ENCODE measurements at regions of chr1 and their contacts with region 1.

Region 1: GRCh38 chr1:169586395-169587255 is at the start of gene F5:
- DNase-seq: peak; percentile 92
- ATAC-seq: peak; percentile 96
- H3K4me3 ChIP-seq: peak within 1 kb of the TSS; percentile 84 to 98 (median 98)
- H3K27ac ChIP-seq: peak within 1 kb of the TSS; percentile 95
- H3K4me1 ChIP-seq: peaks cover 57% of the 10 kb centered on the region
- H3K27me3 ChIP-seq: no peaks in the 10 kb centered on the region; a peak in 1 of 5 replicates
- CTCF ChIP-seq: peak; percentile 90
- EP300 ChIP-seq: peak in 1 of 2 experiments; percentile 57; a peak in 2 of 4 replicates
- POLR2A ChIP-seq: peak; percentile 94 to 95
- RAD21 ChIP-seq: peak; percentile 81
- total RNA-seq, gene F5: 38.3 and 38.5 TPM in 2 replicates

Region 2: GRCh38 chr1:169466259-169467230 is 120.1 kb before region 1 on chr1:
- CTCF ChIA-PET with region 1: no interaction called
- POLR2A ChIA-PET with region 1: no interaction called
- in situ Hi-C with region 1: no loop called
- intact Hi-C with region 1: loop called (anchors 5 kb)
- DNase-seq: peak; percentile 24
- ATAC-seq: peak; percentile 69
- H3K4me3 ChIP-seq: no peak overlapping the region
- H3K27ac ChIP-seq: no peak overlapping the region
- H3K4me1 ChIP-seq: no peaks in the 10 kb centered on the region
- H3K27me3 ChIP-seq: no peaks in the 10 kb centered on the region
- CTCF ChIP-seq: peak; percentile 43
- EP300 ChIP-seq: no peak
- POLR2A ChIP-seq: no peak
- RAD21 ChIP-seq: peak; percentile 25; the same call in 1 of the 2 replicates

Region 3: GRCh38 chr1:169485544-169486278 is 100.9 kb before region 1 on chr1 and contains the start of gene SLC19A2:
- CTCF ChIA-PET with region 1: no interaction called
- POLR2A ChIA-PET with region 1: interaction called, 17 read pairs
- in situ Hi-C with region 1: no loop called
- intact Hi-C with region 1: no loop called
- DNase-seq: peak; percentile 98
- ATAC-seq: peak; percentile 98
- H3K4me3 ChIP-seq: peak within 1 kb of the TSS; percentile 74 to 87 (median 81)
- H3K27ac ChIP-seq: peak within 1 kb of the TSS; percentile 95
- H3K4me1 ChIP-seq: peaks cover 62% of the 10 kb centered on the region
- H3K27me3 ChIP-seq: no peaks in the 10 kb centered on the region; a peak in 1 of 5 replicates
- CTCF ChIP-seq: peak; percentile 51
- EP300 ChIP-seq: peak; percentile 11 to 43; a peak in 1 of 4 replicates
- POLR2A ChIP-seq: peak; percentile 95 to 96
- RAD21 ChIP-seq: peak; percentile 11; the same call in 1 of the 2 replicates
- total RNA-seq, gene SLC19A2: 19.1 and 30.4 TPM in 2 replicates

Region 4: GRCh38 chr1:169546087-169546995 is 40.3 kb before region 1 on chr1:
- CTCF ChIA-PET with region 1: interaction called, 10 read pairs
- POLR2A ChIA-PET with region 1: interaction called, 7 read pairs
- in situ Hi-C with region 1: no loop called
- intact Hi-C with region 1: loop called (anchors 1 kb)
- DNase-seq: peak; percentile 66
- ATAC-seq: peak; percentile 81
- H3K4me3 ChIP-seq: no peak overlapping the region
- H3K27ac ChIP-seq: peak overlapping the region; percentile 23
- H3K4me1 ChIP-seq: peaks cover 14% of the 10 kb centered on the region
- H3K27me3 ChIP-seq: no peaks in the 10 kb centered on the region
- CTCF ChIP-seq: peak; percentile 83
- EP300 ChIP-seq: peak in 1 of 2 experiments; percentile 45; a peak in 1 of 4 replicates
- POLR2A ChIP-seq: no peak
- RAD21 ChIP-seq: peak; percentile 36; the same call in 1 of the 2 replicates

Region 5: GRCh38 chr1:169565335-169566271 is 21.0 kb before region 1 on chr1:
- CTCF ChIA-PET with region 1: no interaction called
- POLR2A ChIA-PET with region 1: interaction called, 37 read pairs
- in situ Hi-C with region 1: no loop called
- intact Hi-C with region 1: no loop called
- DNase-seq: peak; percentile 65
- ATAC-seq: peak; percentile 49
- H3K4me3 ChIP-seq: no peak overlapping the region
- H3K27ac ChIP-seq: peak overlapping the region; percentile 64
- H3K4me1 ChIP-seq: peaks cover 65% of the 10 kb centered on the region
- H3K27me3 ChIP-seq: no peaks in the 10 kb centered on the region
- CTCF ChIP-seq: no peak
- EP300 ChIP-seq: peak in 1 of 2 experiments; percentile 68; a peak in 1 of 4 replicates
- POLR2A ChIP-seq: no peak
- RAD21 ChIP-seq: no peak

Region 6: DNA sequence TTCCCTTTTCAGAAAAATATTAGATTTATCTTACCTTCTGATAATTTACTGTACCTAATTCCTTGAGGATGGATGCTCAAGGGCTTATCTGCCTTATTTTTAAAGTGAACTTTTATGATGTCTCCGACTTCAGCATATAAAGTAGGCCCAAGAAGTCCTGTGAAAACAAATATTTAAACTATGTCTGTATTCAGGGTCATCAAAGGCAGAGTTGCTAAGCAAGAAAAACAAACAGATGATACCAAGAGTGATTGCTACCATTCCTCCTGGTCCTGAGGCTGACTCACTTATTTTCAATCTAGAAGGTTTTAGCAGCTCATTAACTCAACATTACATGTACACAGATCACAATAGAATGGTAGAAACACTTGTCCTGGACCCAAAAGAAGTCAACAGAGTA is 14.4 kb before region 1 on chr1:
- CTCF ChIA-PET with region 1: no interaction called
- POLR2A ChIA-PET with region 1: interaction called, 60 read pairs
- in situ Hi-C with region 1: no loop called
- intact Hi-C with region 1: loop called (anchors 1 kb)
- DNase-seq: peak; percentile 90
- ATAC-seq: peak; percentile 78
- H3K4me3 ChIP-seq: no peak overlapping the region; a peak in 1 of 6 replicates
- H3K27ac ChIP-seq: peak overlapping the region; percentile 96
- H3K4me1 ChIP-seq: peaks cover 100% of the 10 kb centered on the region
- H3K27me3 ChIP-seq: no peaks in the 10 kb centered on the region
- CTCF ChIP-seq: no peak
- EP300 ChIP-seq: peak; percentile 78 to 81; a peak in 3 of 4 replicates
- POLR2A ChIP-seq: no peak
- RAD21 ChIP-seq: no peak

Region 7: DNA sequence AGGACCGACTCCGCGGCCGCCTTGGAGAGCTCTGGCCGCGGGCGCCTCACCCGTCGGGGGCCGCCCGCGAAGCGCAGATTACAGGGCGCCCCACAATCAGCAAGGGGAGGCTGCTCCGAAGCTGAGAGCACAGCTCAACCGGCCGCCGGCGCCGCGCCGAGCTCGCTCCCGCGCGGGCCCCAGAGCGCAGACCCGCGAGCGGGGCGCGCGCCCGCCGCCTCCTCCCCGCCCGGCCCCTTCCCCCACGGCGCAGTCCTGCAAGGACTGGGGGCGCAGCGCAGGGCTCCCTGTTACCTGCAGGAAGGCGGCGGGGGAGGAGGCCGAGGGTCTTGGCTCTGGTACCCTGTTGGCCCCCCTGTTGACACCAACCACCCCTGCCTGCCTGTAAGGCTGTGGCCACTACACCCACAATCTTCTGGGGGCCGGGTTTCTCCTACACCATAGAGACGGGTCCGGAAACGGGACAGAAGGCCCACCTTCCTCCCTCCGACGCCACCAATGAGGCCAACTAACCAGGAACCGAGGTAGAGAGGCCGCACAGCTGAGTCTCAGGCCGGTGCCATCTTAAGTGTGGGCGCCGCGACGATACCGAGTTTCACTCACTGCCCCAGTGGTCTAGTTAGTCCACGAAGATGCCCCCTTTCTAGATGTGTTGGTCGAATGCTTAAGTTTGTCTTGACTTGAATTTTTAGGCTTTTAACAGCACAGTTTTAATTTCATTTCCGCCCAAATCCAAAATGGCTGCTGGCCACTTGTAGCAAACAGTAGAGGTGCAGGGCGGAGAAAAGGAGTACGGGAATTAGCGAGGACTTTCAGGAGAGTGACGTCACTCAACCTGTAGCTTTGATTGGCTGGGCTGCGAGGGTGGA is 307.1 kb after region 1 on chr1 and contains the start of gene SCYL3:
- CTCF ChIA-PET with region 1: no interaction called
- POLR2A ChIA-PET with region 1: interaction called, 4 read pairs
- in situ Hi-C with region 1: no loop called
- intact Hi-C with region 1: loop called (anchors 5 kb)
- DNase-seq: peak; percentile 96
- ATAC-seq: peak; percentile 96
- H3K4me3 ChIP-seq: peak within 1 kb of the TSS; percentile 81 to 90 (median 87)
- H3K27ac ChIP-seq: peak within 1 kb of the TSS; percentile 99
- H3K4me1 ChIP-seq: peaks cover 36% of the 10 kb centered on the region
- H3K27me3 ChIP-seq: peaks cover 0 to 4% of the 10 kb centered on the region in 2 experiments; a peak in 1 of 5 replicates
- CTCF ChIP-seq: no peak; the same call in 1 of the 2 replicates
- EP300 ChIP-seq: 0 out of 4 replicates have a peak, but pooled peaks of 1 of the 2 experiments have one; percentile 13
- POLR2A ChIP-seq: peak; percentile 82 to 83
- RAD21 ChIP-seq: no peak; the same call in 1 of the 2 replicates
- total RNA-seq, gene SCYL3: 4.9 and 6.3 TPM in 2 replicates

Measured in HepG2 (cell line).